ENCODE measurements at regions of chr11 and their contacts with region 1.

Region 1: DNA sequence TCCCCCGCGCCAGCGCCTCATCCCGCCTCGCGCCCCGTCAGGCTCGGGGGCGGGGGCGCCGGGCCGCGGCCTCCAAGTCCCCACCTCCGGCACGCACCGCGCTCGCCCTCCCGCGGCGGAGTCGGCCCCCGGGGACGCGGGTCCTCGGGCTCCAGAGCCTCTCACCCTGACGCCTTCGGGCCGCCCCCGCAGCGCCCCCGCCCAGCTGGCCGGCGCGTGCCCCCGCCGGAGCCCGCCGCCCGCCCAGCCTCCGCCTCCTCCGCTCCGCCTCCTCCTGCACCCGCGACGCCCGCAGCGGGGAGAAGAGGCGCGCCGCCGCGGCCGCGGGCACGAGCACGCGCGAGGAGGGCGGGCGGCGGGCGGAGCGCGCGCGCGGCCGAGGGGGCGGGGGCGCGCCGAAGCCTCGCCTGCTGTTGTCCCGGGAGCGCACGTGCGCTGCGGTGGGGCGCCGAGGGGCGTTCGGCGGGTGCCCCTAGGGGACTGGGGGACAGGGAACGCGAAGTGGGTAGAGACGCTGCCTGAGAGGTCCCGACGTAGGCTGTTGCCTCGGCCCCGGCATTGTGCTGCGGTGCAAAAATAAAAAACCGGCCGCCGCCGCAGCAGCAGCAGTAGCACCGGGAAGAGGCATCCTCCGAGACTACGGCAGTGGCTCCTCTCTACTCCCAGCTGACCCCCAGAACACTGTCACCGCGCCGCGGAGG is 87.4 kb upstream of the ARHGAP32 start:
- DNase-seq: peak; percentile 63
- H3K4me3 Mint-ChIP-seq: peak overlapping the region; percentile 77
- H3K27ac Mint-ChIP-seq: peak overlapping the region; percentile 85
- H3K4me1 Mint-ChIP-seq: peaks cover 35% of the 10 kb centered on the region
- H3K27me3 Mint-ChIP-seq: peaks cover 8% of the 10 kb centered on the region

Region 2: GRCh38 chr11:128195057-128195751 is 1084.3 kb before region 1 on chr11:
- CTCF ChIA-PET with region 1: no interaction called
- intact Hi-C with region 1: loop called (anchors 5 kb)
- DNase-seq: peak; percentile 77
- H3K4me3 Mint-ChIP-seq: peak overlapping the region; percentile 6
- H3K27ac Mint-ChIP-seq: peak overlapping the region; percentile 32
- H3K4me1 Mint-ChIP-seq: peaks cover 42% of the 10 kb centered on the region
- H3K27me3 Mint-ChIP-seq: no peaks in the 10 kb centered on the region

Region 3: GRCh38 chr11:128928400-128928799 is 351.1 kb before region 1 on chr11:
- CTCF ChIA-PET with region 1: no interaction called
- intact Hi-C with region 1: no loop called
- DNase-seq: peak; percentile 18
- H3K4me3 Mint-ChIP-seq: no peak overlapping the region
- H3K27ac Mint-ChIP-seq: no peak overlapping the region
- H3K4me1 Mint-ChIP-seq: peaks cover 11% of the 10 kb centered on the region
- H3K27me3 Mint-ChIP-seq: no peaks in the 10 kb centered on the region

Region 4: GRCh38 chr11:129117595-129118350 is 161.7 kb before region 1 on chr11:
- CTCF ChIA-PET with region 1: no interaction called
- intact Hi-C with region 1: loop called (anchors 1 kb)
- DNase-seq: peak; percentile 64
- H3K4me3 Mint-ChIP-seq: no peak overlapping the region
- H3K27ac Mint-ChIP-seq: no peak overlapping the region
- H3K4me1 Mint-ChIP-seq: peaks cover 3% of the 10 kb centered on the region
- H3K27me3 Mint-ChIP-seq: no peaks in the 10 kb centered on the region

Region 5: GRCh38 chr11:129300099-129300498 is 20.6 kb after region 1 on chr11:
- CTCF ChIA-PET with region 1: no interaction called
- intact Hi-C with region 1: loop called (anchors 1 kb)
- DNase-seq: peak; percentile 19
- H3K4me3 Mint-ChIP-seq: no peak overlapping the region
- H3K27ac Mint-ChIP-seq: no peak overlapping the region
- H3K4me1 Mint-ChIP-seq: peaks cover 14% of the 10 kb centered on the region
- H3K27me3 Mint-ChIP-seq: peaks cover 24% of the 10 kb centered on the region

Region 6: DNA sequence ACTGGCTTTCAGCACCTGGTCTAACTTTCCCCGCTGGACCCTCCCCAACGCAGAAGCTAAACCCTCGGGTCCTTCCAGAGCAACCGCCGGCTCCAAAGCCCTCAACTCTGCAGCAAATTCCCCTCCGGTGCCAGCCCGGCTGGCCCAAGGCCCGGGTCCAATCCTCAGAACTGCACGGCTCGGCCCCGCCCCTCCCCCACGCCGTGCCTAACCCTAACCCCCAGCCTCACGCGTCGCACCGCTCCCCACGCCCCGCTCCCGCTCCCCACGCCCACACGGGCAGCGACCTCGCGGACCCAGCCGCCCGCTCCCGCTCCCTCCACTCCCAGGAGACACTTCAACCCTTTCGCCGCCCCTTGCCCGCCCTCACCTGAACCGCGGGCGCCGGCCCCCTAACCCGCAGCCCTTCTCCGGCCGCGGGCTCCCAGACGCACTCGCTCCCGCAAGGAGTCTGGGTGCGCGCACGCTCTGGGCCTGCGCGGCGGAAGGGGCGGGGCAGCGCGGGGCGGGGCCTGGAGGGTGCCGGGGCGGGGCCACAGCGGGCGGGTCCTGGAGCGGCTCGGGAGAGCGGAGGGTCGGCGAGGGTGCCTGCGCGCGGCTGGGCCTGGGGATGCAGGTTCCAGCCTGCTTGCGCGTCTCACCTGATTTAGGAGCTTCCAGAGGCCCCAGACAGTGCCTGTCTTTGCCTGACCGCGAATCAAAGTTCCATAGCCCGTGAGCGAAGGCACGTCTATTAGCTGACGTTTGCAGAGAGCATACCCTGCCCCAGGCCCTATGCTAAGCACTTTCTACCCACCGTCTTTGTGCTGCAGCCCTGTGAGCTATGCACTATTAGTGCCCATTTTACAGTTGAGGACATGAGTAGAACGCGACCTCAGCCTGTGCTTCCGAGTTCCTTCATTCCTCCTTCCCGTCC is 615.9 kb after region 1 on chr11 and contains the start of gene NFRKB:
- CTCF ChIA-PET with region 1: no interaction called
- intact Hi-C with region 1: loop called (anchors 2 kb)
- DNase-seq: peak; percentile 83
- H3K4me3 Mint-ChIP-seq: peak within 1 kb of the TSS; percentile 87
- H3K27ac Mint-ChIP-seq: peak within 1 kb of the TSS; percentile 79
- H3K4me1 Mint-ChIP-seq: peaks cover 27% of the 10 kb centered on the region
- H3K27me3 Mint-ChIP-seq: no peaks in the 10 kb centered on the region
- total RNA-seq, gene NFRKB: 34.0 to 36.4 TPM